ENCODE measurements at regions of chr4 and their contacts with region 1.

Region 1: DNA sequence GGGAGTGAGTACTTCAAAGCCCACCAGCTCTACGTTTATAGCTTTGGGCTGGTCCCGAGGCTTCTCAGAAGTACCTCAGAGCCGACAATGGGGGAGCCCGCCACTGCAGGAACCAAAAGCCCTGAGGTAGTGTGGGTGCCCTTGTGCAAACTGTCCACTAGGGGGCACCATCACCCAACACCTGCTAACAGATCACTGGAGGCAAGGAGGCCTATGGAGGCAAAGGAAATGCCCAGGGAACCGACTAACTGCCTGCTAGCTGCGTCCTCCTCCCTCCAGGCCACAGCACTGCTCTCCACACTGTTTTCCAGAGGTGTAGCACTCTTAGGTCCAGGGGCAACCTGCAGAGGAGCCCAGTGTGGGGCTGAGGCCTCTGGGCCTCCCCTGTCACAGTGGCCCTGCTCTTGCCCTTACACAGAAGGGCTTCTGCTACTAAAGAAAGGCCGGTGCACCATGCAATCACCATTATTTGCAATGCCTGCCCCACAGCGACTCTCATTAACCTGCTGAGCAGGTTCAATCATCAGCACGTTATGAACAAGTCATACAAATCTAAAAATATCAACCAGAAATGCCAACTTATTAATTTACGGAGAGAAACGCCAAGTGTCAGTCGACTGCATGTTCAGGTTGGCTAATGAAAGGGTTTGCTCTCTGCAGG is 159.1 kb downstream of the NSUN7 start:
- DNase-seq: peak; percentile 86
- H3K4me3 Mint-ChIP-seq: no peak overlapping the region
- H3K27ac Mint-ChIP-seq: peak overlapping the region; percentile 83
- H3K4me1 Mint-ChIP-seq: peaks cover 23% of the 10 kb centered on the region
- H3K27me3 Mint-ChIP-seq: no peaks in the 10 kb centered on the region

Region 2: DNA sequence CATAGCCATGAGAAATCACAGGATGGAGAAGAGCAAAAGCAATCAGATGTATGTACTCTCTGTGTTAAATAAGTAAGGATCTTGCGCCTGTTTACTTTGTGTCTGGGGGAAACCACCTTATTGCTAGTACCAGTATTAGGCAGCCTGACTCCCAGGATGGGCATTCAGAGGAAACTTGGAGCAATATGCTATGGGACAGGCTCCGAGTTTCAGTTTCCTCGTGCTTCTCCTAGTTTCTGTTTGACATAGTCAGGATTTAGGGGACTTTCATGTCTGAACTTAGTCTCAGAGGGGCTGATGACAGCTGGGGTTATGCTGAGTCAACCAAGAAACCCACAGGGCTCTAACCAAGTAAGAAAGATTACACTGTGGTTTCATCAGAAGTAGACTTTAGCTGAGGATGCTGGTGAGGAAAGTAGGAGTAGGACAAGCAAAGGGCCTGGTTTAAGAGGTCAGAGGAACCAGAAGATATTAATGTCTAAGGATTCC is 145.6 kb before region 1 on chr4:
- CTCF ChIA-PET with region 1: no interaction called
- POLR2A ChIA-PET with region 1: no interaction called
- intact Hi-C with region 1: loop called (anchors 2 kb)
- DNase-seq: peak; percentile 76
- H3K4me3 Mint-ChIP-seq: no peak overlapping the region
- H3K27ac Mint-ChIP-seq: peak overlapping the region; percentile 16
- H3K4me1 Mint-ChIP-seq: peaks cover 11% of the 10 kb centered on the region
- H3K27me3 Mint-ChIP-seq: peaks cover 4% of the 10 kb centered on the region

Region 3: GRCh38 chr4:40890764-40891163 is 18.1 kb before region 1 on chr4:
- CTCF ChIA-PET with region 1: no interaction called
- POLR2A ChIA-PET with region 1: no interaction called
- intact Hi-C with region 1: no loop called
- DNase-seq: no peak
- H3K4me3 Mint-ChIP-seq: no peak overlapping the region
- H3K27ac Mint-ChIP-seq: no peak overlapping the region
- H3K4me1 Mint-ChIP-seq: peaks cover 4% of the 10 kb centered on the region
- H3K27me3 Mint-ChIP-seq: peaks cover 3% of the 10 kb centered on the region

Region 4: DNA sequence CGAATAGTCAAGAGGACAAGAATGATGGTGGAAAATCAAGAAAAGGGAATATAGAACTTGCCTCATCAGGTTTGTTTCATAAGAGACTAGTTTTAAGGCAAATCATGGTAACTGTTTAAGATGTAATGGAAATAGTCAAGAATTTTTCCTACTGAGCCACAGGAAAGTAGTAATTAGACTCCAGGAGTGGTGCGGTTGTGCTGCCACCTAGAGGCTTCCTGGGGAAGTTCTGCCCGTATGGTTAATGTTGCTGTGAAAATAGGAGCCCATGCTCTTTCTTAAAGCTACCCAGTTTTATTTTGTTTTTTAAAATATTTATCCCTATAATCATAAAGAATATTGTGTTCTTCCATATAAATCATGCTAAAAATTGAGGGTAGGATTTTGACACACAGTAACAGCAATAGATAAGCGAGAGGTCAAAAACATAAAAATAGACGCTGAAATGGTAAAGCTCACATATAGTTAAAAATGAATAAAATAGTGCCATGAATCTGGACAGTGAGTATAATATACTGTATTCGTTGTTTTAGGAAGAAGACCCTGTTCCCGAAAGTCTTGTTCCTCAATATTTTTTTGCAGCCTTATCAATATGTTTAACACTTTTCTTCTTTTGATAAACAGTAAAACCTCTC is 752.7 kb after region 1 on chr4:
- CTCF ChIA-PET with region 1: no interaction called
- POLR2A ChIA-PET with region 1: no interaction called
- intact Hi-C with region 1: loop called (anchors 2 kb)
- DNase-seq: peak; percentile 57
- H3K4me3 Mint-ChIP-seq: no peak overlapping the region
- H3K27ac Mint-ChIP-seq: no peak overlapping the region
- H3K4me1 Mint-ChIP-seq: no peaks in the 10 kb centered on the region
- H3K27me3 Mint-ChIP-seq: peaks cover 10% of the 10 kb centered on the region